A673 (cell line): ENCODE measurements at regions of chr7 and their contacts with region 1.

Region 1: GRCh38 chr7:5248201-5248885 is 34.4 kb upstream of the SLC29A4 start:
- DNase-seq: no peak
- H3K4me3 ChIP-seq: no peak overlapping the region
- H3K27ac ChIP-seq: no peak overlapping the region
- H3K4me1 ChIP-seq: no peaks in the 10 kb centered on the region
- H3K27me3 ChIP-seq: no peaks in the 10 kb centered on the region
- CTCF ChIP-seq: no peak

Region 2: GRCh38 chr7:5363729-5364128 is 115.4 kb after region 1 on chr7:
- CTCF ChIA-PET with region 1: no interaction called
- POLR2A ChIA-PET with region 1: no interaction called
- intact Hi-C with region 1: loop called (anchors 10 kb)
- DNase-seq: no peak
- H3K4me3 ChIP-seq: no peak overlapping the region
- H3K27ac ChIP-seq: no peak overlapping the region
- H3K4me1 ChIP-seq: peaks cover 4% of the 10 kb centered on the region
- H3K27me3 ChIP-seq: no peaks in the 10 kb centered on the region
- CTCF ChIP-seq: no peak

Region 3: DNA sequence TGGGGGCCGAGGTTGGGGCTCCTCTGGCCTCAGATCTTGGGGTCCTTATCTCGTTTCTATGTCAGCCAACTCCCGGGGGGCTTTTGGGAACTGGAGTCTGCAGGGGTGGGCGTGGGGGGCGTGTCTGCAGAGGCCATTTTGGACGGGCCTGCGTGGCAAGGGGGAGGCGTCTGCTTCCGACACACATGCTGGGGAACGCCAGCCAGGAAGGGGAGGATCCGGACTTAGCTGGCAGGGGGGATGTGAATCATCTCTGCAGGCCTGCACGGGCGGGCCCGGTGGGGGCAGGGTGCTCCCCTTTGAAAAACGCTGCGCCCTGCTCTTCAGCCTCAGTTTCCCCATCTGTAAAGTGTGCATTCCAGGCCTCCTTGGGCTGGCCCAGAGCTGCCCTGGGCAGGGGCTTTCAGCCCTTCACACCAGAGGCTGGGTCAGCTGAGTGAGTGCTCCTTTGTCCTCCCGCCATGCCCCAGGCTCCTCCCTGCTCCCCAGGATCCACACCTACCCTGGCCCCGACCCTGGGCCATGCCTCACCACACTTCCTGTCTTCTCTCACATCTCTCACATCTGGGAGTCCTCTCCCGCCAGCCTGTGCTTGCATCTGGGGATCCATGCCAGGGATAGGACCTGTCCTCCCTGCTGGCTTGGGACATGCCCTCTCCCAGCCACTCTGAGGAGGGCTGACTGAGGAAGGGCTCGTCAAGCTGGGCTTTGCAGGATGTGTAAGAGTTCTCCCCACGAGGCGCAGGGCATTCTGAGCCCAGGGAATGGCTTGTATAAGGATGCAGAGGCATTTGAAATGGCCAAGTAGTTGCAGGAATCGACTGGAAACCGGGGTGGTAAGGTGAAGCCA is 347.9 kb after region 1 on chr7:
- CTCF ChIA-PET with region 1: no interaction called
- POLR2A ChIA-PET with region 1: interaction called, 10 read pairs
- intact Hi-C with region 1: no loop called
- DNase-seq: peak; percentile 97
- H3K4me3 ChIP-seq: peak overlapping the region; percentile 97
- H3K27ac ChIP-seq: peak overlapping the region; percentile 85
- H3K4me1 ChIP-seq: peaks cover 41% of the 10 kb centered on the region
- H3K27me3 ChIP-seq: no peaks in the 10 kb centered on the region
- CTCF ChIP-seq: no peak

Region 4: DNA sequence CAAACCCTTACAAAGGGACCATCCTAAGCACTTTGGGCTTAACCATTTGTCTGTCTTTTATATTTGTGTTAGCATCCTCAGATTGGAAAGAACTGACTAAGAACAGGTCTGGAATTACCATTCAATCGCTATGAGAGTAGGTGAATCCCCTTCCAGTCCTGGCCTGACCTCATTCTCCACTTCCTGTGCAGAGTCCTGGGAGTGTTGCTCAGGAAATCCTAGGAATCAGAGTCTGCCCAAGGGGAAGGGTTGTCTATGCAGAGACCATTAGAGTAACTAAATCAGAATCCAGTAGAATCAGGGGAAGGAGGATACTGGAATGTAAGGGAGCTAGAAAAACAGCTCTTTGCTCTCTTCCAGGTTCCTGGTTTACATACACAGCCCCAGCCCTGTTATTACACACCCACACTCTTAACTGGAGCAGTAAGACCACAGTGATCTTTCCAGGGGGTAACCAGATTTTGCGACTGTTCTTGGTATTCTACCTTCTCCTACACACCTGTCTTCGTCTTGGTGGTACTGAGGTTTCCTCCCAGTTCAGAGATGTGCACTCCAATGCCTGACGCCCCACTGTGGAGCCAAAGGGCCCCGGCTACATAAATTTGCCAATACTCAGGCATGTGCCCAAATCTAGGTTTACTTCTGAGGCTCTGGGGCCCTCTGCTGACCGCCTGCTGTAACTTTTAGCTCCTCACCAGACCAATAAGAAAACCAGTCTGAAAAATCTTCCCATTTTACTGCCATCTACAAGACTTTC is 429.4 kb after region 1 on chr7:
- CTCF ChIA-PET with region 1: no interaction called
- POLR2A ChIA-PET with region 1: no interaction called
- intact Hi-C with region 1: loop called (anchors 10 kb)
- DNase-seq: peak; percentile 74
- H3K4me3 ChIP-seq: no peak overlapping the region
- H3K27ac ChIP-seq: no peak overlapping the region
- H3K4me1 ChIP-seq: no peaks in the 10 kb centered on the region
- H3K27me3 ChIP-seq: no peaks in the 10 kb centered on the region
- CTCF ChIP-seq: peak; percentile 69